ENCODE measurements at regions of chr6 and their contacts with region 1.

Region 1: DNA sequence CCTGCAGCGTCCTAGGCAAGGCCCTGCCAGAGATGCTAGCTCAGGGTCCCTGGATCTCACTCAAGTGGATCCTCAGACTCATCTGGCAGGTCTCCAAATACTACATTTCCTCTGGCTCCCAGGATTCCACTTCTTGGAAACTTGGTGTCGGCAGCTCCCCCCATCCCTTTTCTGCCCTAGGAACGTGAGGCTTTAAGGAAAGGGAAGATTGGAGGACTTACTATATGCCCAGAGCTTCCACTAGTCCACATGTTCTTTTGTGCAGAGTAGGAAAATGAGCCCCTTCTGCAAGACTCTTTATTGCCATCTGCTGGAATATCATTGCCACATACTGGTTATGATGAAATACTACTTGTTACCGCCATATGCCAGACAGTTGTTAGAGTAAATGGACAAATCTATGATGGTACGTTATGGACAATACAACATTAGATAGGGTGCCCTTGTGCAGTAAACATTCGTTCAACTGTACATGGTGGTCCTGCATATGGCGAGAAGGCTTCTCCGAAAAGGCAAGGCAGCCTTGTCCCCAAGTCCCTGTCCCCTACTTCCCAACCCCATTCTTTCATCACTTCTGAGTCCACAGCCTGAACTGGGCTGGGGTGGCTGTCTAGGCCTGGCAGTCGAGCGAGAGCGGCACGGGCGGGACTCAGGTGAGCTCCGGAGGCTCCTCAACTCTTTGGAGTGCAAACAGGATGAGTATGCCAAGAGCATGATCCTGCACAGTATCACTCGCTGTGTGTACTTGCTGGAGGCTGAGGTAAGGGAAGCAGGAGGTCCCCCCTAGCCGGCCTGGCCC is 780 bp downstream of the ARMC12 start:
- DNase-seq: no peak

Region 2: DNA sequence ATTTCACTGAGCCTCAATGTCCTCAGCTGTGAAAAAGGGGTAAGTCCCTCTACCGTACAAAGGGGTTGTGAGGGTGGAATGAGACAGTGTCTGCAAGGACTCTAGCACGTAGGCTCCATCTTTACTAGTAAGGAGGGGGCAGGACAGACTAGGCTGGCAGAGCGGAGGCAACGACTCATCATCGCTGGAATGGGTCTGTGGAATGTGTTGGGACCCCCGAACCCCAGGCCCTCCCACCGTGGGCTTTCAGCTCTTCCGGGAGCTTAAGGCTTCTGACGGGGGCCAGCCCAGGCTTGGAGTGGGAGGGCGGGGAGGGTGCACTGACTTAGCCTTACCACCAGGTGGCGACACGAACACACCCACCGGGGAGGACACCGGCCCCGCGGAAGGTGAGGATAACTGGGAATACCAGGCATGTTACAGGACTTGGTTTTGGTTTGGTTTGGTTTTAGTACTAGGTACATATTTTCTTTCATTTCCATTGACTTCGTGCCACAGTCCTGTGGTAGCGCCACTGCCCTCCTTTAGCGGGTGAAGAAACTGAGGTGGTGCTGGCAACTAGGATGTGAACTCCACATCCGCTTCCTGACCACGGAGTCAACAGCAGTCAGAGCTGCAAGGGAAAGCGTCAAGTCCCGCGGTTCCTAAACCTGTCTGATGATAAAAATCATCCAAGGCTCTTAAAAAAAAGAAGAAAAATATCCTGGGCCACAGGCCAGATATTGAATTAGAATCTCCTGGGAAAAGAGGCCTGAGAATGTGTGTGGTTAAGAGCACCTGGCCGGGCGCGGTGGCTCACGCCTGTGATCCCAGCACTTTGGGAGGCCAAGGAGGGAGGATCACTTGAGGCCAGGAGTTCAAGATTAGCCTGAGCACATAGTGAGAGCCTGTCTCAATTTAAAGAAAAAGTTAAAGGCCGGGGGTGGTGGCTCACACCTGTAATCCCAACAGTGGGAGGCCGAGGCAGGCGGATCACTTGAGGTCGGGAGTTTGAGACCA is 214.7 kb before region 1 on chr6:
- intact Hi-C with region 1: loop called (anchors 1 kb)
- DNase-seq: peak; percentile 86